Sigmoid colon (tissue), 7 donors: ENCODE measurements at regions of chr5 and their contacts with region 1.

Region 1: GRCh38 chr5:140346348-140347101 is at the start of gene HBEGF:
- DNase-seq: peak; percentile 88
- H3K4me3 ChIP-seq: peak within 1 kb of the TSS; percentile 54 to 78 (median 70)
- H3K27ac ChIP-seq: peak within 1 kb of the TSS; percentile 79 to 93 (median 86)
- H3K4me1 ChIP-seq: peaks cover 0 to 47% (median 36%) of the 10 kb centered on the region in 4 donors
- H3K27me3 ChIP-seq: no peaks in the 10 kb centered on the region
- CTCF ChIP-seq: peak in 2 of 4 experiments; percentile 25 to 27
- EP300 ChIP-seq: no peak
- POLR2A ChIP-seq: peak; percentile 68 to 75
- total RNA-seq, gene HBEGF: 4.7 to 17.6 (median 10.4) TPM

Region 2: DNA sequence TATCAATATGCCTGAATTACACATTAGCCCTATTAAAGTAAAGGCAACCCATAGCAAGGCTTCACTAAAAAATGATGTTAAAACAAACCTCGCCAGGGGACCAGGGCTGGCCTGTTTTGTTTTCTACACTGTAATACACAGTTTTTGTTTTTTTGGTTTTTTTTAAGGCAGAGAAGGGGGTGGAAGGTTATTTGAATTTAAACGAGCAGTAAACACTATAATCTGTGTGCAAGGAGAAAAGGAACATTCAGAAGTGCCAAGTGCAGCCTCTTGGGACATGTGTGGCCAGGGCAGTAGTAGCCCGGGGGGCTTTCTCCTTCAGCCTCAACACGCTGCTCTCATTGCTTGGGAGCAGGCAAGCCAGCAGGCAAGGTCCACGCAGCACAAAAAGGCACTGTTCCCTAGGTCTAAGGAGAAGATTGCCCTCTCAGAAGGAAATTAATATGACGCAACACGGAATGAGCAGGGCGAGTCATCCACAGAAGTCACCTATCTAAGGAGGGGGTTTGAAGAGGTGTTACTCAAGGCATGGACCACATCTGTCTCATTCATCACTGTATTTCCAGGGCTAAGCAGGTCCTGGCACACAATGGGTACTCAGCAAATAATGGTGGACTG is 1164.6 kb before region 1 on chr5:
- intact Hi-C with region 1: no loop called
- DNase-seq: peak; percentile 65
- H3K4me3 ChIP-seq: no peak overlapping the region
- H3K27ac ChIP-seq: peak overlapping the region; percentile 38 to 82 (median 64)
- H3K4me1 ChIP-seq: peaks cover 4 to 99% (median 97%) of the 10 kb centered on the region in 4 donors
- H3K27me3 ChIP-seq: no peaks in the 10 kb centered on the region
- CTCF ChIP-seq: no peak
- EP300 ChIP-seq: no peak
- POLR2A ChIP-seq: no peak

Region 3: GRCh38 chr5:140174465-140175366 is 171.8 kb before region 1 on chr5 and contains the start of gene CYSTM1:
- intact Hi-C with region 1: loop called (anchors 5 kb)
- DNase-seq: peak; percentile 99
- H3K4me3 ChIP-seq: peak within 1 kb of the TSS; percentile 79 to 99 (median 94)
- H3K27ac ChIP-seq: peak within 1 kb of the TSS; percentile 95 to 99 (median 98)
- H3K4me1 ChIP-seq: peaks cover 0 to 34% (median 28%) of the 10 kb centered on the region in 4 donors
- H3K27me3 ChIP-seq: no peaks in the 10 kb centered on the region
- CTCF ChIP-seq: no peak
- EP300 ChIP-seq: peak in 3 of 4 donors; percentile 30 to 90 (median 41)
- POLR2A ChIP-seq: peak; percentile 49 to 89
- total RNA-seq, gene CYSTM1: 23.8 to 51.7 (median 36.2) TPM

Region 4: DNA sequence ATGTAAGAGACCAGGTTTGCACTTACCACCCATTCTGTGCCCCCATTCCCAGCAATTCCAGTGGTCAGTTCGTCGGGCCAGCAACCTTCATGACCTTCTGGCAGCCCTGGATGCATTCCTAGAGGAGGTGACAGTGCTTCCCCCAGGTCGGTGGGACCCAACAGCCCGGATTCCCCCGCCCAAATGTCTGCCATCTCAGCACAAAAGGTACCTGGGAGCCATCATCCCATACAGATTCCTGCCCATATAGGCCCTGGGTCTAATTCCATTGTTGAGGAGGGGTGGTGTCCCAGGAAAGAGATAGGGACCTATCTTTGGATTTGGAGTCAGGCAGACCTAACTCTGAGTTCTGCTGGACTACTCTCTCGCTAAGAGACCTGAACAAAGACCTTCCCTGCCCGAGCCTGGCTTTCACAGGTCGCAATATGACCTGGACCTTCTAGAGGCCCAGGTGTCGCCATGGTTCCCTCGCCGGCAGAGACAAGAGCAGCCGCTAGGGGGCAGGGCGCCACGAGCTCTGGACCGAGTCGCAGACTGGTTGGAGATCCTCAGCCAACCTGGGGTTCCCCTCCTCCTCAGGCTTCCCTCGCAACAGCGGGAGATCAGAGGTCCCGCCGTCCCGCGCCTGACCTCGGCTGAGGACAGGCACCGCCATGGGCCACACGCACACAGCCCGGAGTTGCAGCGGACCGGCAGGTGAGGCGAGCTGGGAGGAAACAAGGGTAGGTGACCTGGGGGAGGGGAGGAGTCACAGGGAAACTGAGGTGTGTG is 16.5 kb after region 1 on chr5:
- intact Hi-C with region 1: no loop called
- DNase-seq: peak; percentile 83
- H3K4me3 ChIP-seq: peak overlapping the region in 2 of 4 donors; percentile 11 to 29
- H3K27ac ChIP-seq: no peak overlapping the region
- H3K4me1 ChIP-seq: peaks cover 0 to 7% (median 5%) of the 10 kb centered on the region in 4 donors
- H3K27me3 ChIP-seq: no peaks in the 10 kb centered on the region
- CTCF ChIP-seq: peak; percentile 34 to 92 (median 68)
- EP300 ChIP-seq: no peak
- POLR2A ChIP-seq: no peak

Region 5: DNA sequence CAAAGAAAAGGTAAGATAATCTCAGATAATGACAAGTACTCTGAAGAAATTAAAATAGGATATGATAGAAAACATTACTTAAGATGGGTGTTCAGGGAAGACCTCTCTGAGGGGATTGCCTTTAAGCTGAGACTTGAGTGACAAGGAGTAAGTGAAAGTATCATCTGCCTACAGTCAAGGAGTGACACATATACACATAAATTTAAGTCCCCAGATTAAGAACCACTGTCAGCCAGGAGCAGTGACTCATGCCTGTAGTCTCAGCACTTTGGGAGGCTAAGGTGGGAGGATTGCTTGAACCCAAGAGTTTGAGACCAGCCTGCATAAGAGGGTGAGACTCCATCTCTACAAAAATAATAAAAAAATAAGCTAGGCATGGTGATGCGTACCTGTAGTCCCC is 35.4 kb after region 1 on chr5:
- intact Hi-C with region 1: no loop called
- DNase-seq: no peak
- H3K4me3 ChIP-seq: no peak overlapping the region
- H3K27ac ChIP-seq: no peak overlapping the region
- H3K4me1 ChIP-seq: no peaks in the 10 kb centered on the region
- H3K27me3 ChIP-seq: no peaks in the 10 kb centered on the region
- CTCF ChIP-seq: no peak
- EP300 ChIP-seq: no peak
- POLR2A ChIP-seq: no peak